CD8-positive, alpha-beta T cell (primary cell): ENCODE measurements at regions of chr9 and their contacts with region 1.

Region 1: GRCh38 chr9:132079391-132080091 is at the start of gene MED27:
- DNase-seq: peak; percentile 82 to 97 (median 94)
- ATAC-seq: peak; percentile 98
- H3K4me3 ChIP-seq: peak within 1 kb of the TSS; percentile 66 to 67
- H3K4me3 Mint-ChIP-seq: peak within 1 kb of the TSS; percentile 97
- H3K27ac ChIP-seq: peak within 1 kb of the TSS; percentile 57 to 65
- H3K27ac Mint-ChIP-seq: peak within 1 kb of the TSS; percentile 95
- H3K4me1 ChIP-seq: peaks cover 28% of the 10 kb centered on the region
- H3K4me1 Mint-ChIP-seq: peaks cover 50% of the 10 kb centered on the region
- H3K27me3 ChIP-seq: no peaks in the 10 kb centered on the region
- H3K27me3 Mint-ChIP-seq: no peaks in the 10 kb centered on the region
- CTCF ChIP-seq: no peak
- total RNA-seq, gene MED27: 17.8 to 18.6 TPM

Region 2: DNA sequence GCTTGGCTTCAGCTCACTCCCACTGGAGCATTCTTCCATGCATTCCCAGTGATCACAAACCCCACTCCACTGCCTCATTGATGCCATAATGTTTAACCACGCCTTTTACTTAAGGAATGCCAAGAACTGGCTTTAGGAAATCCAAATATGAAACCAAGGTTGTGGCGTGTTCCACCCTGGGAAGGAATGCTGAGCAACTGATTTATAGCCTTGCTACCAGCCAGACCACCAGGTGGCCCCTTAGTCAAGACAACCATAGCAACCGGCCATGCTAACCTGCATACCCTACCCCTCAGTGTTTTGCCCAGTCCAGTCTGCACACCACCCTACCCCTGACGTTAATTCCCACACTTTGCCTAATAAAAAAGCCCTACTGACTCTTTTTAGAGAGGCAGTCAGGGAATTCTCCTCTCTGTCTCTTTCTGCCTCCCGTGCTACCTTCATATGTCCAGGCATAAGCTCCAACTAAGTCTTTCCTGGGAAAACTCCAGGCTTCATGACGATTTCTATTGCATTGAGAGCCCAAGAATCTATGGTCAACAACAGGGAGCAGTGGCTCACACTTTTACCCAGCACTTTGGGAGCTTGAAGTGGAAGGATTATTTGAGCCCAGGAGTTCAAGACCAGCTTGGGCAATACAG is 712.7 kb before region 1 on chr9:
- CTCF ChIA-PET with region 1: no interaction called
- POLR2A ChIA-PET with region 1: no interaction called
- intact Hi-C with region 1: loop called in 1 of 2 experiments (anchors 10 kb)
- DNase-seq: peak in 2 of 9 experiments; percentile 35 to 48
- ATAC-seq: no peak
- H3K4me3 ChIP-seq: no peak overlapping the region
- H3K4me3 Mint-ChIP-seq: no peak overlapping the region
- H3K27ac ChIP-seq: no peak overlapping the region
- H3K27ac Mint-ChIP-seq: no peak overlapping the region
- H3K4me1 ChIP-seq: peaks cover 7% of the 10 kb centered on the region
- H3K4me1 Mint-ChIP-seq: peaks cover 13% of the 10 kb centered on the region
- H3K27me3 ChIP-seq: no peaks in the 10 kb centered on the region
- H3K27me3 Mint-ChIP-seq: no peaks in the 10 kb centered on the region
- CTCF ChIP-seq: no peak

Region 3: DNA sequence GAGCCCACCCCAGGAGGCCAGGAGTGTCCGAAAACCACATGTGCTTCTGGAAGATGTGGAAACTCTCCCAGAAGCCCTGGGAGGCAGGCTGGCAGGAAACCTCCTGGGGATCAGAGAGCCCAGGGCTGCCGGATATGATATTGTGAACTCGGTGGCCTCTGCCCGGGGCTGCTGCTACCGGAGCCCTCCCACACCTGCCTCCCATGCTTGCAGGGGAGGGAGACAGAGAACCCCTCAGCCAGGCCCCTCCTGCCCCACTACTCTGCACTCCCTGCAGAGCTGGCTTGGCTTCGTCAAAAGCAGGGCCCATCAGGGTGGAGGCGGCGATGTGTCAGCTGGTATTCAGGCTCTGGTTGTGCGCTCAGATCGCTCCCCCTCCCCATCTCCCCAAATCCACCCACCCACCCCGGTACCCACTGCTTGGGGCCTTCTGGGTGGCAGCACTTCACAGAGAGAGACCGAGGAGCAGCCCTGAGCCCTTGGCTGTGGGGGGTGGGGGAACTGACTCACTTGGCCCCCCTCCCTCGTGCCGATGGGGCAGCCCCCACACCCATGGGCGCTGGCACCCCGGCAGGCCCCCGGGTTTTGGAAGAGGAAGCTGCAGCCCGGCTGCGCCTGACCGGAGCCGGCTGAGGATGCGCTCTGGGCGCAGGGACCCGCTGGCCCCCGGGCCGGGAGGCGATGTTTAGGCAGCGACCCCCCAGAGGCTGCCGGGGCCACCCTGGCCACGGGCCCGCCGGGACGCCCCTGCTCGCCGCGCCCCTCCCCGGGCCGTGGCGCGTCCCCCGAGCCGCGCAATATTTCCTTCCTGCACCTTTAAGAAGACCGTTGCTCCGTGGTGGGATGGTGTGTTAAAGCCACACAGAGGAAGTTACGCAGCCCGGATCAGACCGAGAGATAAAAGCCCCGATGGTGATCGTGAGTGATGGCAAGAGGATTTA is 81.5 kb after region 1 on chr9:
- CTCF ChIA-PET with region 1: no interaction called
- POLR2A ChIA-PET with region 1: no interaction called
- intact Hi-C with region 1: loop called (anchors 1 to 5 kb)
- DNase-seq: peak; percentile 22 to 86 (median 63)
- ATAC-seq: peak; percentile 72
- H3K4me3 ChIP-seq: peak overlapping the region; percentile 52 to 71
- H3K4me3 Mint-ChIP-seq: peak overlapping the region; percentile 87
- H3K27ac ChIP-seq: peak overlapping the region in 1 of 2 experiments; percentile 15
- H3K27ac Mint-ChIP-seq: peak overlapping the region; percentile 16
- H3K4me1 ChIP-seq: peaks cover 28% of the 10 kb centered on the region
- H3K4me1 Mint-ChIP-seq: peaks cover 11% of the 10 kb centered on the region
- H3K27me3 ChIP-seq: peaks cover 15 to 16% of the 10 kb centered on the region in 2 experiments
- H3K27me3 Mint-ChIP-seq: peaks cover 25% of the 10 kb centered on the region
- CTCF ChIP-seq: no peak

Region 4: DNA sequence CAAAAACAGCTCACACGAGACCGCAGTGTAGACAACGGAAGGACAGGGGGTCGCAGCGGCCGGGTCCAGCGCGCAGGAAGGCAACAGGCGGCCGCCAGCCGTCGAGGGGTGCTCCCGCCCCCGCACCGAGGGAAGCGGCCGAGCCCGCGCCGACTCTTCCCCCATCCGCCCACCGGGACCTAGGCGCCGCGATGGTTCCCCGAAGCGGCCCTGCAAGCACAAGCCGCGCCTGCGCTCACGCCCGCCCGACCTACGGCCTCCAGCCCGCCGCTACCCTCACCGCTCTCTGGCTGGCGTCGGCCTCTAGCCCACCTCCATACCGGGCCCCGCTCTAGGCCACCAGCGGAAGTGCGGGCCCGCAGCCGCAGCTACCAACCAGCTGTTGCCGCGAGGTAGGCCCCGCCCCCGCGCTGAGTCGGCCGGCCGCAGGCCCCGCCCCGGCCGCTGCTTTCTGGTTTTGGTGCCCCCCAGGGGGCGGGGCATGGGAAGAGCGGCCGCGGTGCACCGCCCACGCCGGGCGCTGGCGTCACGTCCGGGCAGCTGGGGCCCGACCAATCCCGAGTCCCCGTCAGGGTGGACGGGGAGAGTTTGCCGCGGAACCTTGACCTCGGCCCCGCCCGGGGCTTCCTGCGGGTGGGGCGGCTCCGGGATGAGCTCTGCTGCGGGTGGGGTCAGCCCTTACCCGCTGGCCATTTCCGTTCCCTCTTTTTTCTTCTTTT is 275.3 kb after region 1 on chr9 and contains the start of gene SETX:
- CTCF ChIA-PET with region 1: no interaction called
- POLR2A ChIA-PET with region 1: no interaction called
- intact Hi-C with region 1: loop called in 1 of 2 experiments (anchors 5 kb)
- DNase-seq: peak; percentile 92 to 99 (median 97)
- ATAC-seq: peak; percentile 83
- H3K4me3 ChIP-seq: peak within 1 kb of the TSS; percentile 77 to 86
- H3K4me3 Mint-ChIP-seq: peak within 1 kb of the TSS; percentile 87
- H3K27ac ChIP-seq: peak within 1 kb of the TSS; percentile 94 to 97
- H3K27ac Mint-ChIP-seq: peak within 1 kb of the TSS; percentile 98
- H3K4me1 ChIP-seq: peaks cover 40% of the 10 kb centered on the region
- H3K4me1 Mint-ChIP-seq: peaks cover 44% of the 10 kb centered on the region
- H3K27me3 ChIP-seq: no peaks in the 10 kb centered on the region
- H3K27me3 Mint-ChIP-seq: no peaks in the 10 kb centered on the region
- CTCF ChIP-seq: no peak
- total RNA-seq, gene SETX: 37.5 to 40.7 TPM

Region 5: GRCh38 chr9:132669698-132670456 is 590.3 kb after region 1 on chr9 and contains the start of gene DDX31:
- CTCF ChIA-PET with region 1: no interaction called
- POLR2A ChIA-PET with region 1: no interaction called
- intact Hi-C with region 1: loop called in 1 of 2 experiments (anchors 2 kb)
- DNase-seq: peak; percentile 79 to 94 (median 88)
- ATAC-seq: peak; percentile 77
- H3K4me3 ChIP-seq: peak within 1 kb of the TSS; percentile 100
- H3K4me3 Mint-ChIP-seq: peak within 1 kb of the TSS; percentile 91
- H3K27ac ChIP-seq: peak within 1 kb of the TSS; percentile 98 to 99
- H3K27ac Mint-ChIP-seq: peak within 1 kb of the TSS; percentile 97
- H3K4me1 ChIP-seq: peaks cover 22% of the 10 kb centered on the region
- H3K4me1 Mint-ChIP-seq: peaks cover 63% of the 10 kb centered on the region
- H3K27me3 ChIP-seq: no peaks in the 10 kb centered on the region
- H3K27me3 Mint-ChIP-seq: no peaks in the 10 kb centered on the region
- CTCF ChIP-seq: no peak
- total RNA-seq, gene DDX31: 14.1 to 15.6 TPM

Region 6: DNA sequence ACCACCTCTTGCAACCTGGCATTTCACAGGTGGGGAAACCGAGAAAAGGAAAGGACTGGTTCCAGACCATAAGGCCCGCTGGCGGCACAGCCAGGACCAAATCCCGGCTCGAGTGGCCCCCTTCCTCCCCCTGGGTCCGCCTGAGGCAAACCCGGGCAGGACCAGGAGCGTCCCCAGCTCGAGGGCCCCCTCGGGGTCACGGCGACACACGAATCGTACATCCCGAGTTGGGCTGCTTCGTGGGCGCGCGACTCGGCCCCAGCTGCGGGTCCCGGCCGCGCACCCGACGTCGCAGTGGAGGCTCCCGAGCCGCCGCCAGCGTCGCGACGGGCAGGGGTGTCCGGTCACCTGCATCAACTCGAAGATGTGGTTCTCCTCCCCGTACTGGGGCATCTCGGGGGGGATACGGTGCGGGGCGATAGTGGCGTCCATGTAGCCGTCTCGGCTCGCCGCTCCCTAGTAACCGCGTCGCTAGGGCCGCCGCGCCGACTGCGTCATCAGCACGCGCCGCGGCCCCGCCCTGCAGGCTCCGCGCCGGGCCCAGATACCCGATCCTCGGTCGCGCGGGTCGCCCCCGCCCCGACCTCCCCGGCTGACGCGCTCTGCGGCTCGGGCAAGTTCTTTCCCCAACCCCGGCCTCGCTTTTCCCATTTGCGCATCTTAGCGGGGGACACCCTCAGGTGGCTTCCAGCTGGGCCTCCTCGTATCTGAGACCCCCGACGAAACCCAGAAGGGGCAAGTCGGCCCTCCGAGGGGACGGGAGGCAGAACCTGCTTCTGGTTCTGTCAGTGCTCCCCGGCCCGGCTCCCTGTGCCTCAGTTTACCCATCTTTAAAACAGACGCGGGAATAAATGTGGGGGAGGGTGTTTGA is 798.5 kb after region 1 on chr9 and contains the start of gene AK8:
- CTCF ChIA-PET with region 1: no interaction called
- POLR2A ChIA-PET with region 1: no interaction called
- intact Hi-C with region 1: loop called in 1 of 2 experiments (anchors 1 kb)
- DNase-seq: peak; percentile 55 to 88 (median 73)
- ATAC-seq: peak; percentile 88
- H3K4me3 ChIP-seq: peak within 1 kb of the TSS; percentile 96 to 98
- H3K4me3 Mint-ChIP-seq: peak within 1 kb of the TSS; percentile 81
- H3K27ac ChIP-seq: peak within 1 kb of the TSS; percentile 63 to 73
- H3K27ac Mint-ChIP-seq: peak within 1 kb of the TSS; percentile 88
- H3K4me1 ChIP-seq: peaks cover 14% of the 10 kb centered on the region
- H3K4me1 Mint-ChIP-seq: peaks cover 17% of the 10 kb centered on the region
- H3K27me3 ChIP-seq: no peaks in the 10 kb centered on the region
- H3K27me3 Mint-ChIP-seq: no peaks in the 10 kb centered on the region
- CTCF ChIP-seq: no peak
- total RNA-seq, gene AK8: not detected